Heart right ventricle (tissue), 16 donors: ENCODE measurements at regions of chr6 and their contacts with region 1.

Region 1: DNA sequence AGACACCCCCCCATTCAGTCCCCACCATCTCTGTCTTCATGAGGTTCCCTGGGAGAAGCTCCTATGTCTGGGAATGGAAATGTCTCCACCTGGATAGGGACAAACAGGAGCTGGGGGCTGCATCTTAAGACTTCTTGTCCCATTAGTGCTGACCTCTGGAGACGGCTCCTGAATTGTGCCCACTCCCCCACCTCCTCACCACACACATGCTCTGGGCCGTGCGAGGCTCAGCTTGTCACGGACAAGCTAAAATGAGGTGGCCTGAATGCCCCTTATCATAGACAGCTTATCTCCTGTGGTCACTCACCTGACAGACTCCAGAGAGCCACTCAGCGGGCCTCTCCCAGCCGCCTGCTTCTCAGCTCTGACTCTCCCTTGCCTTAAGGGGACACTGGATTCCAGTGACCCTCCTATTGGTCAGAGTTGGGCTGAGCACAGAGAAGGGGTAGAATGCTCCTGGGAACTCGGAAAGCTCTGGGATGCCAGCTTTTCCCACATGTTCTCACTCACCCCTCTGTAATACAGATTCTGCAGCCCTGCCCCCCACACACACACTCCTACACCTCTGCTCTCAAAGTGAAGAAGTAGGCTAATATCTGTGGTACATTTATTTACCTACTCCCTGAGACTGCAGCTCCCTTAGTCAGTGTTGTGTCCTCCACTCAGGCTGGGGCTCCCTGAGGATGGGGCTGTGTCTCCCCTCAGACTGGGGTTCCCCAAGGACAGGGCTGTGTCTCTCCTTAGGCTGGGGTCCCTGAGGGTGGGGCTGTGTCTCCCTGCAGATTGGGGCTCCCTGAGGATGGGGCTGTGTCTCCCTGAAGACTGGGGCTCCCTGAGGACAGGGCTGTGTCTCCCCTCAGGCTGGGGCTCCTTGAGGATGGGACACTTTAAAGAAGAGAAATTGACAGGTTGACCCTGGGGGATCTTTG is 167.5 kb downstream of the VEGFA start:
- DNase-seq: no peak
- ATAC-seq: peak in 5 of 8 donors; percentile 7 to 56 (median 29)
- H3K4me3 ChIP-seq: no peak overlapping the region
- H3K27ac ChIP-seq: no peak overlapping the region
- H3K4me1 ChIP-seq: peaks cover 0 to 20% (median 6%) of the 10 kb centered on the region in 9 donors
- H3K27me3 ChIP-seq: no peaks in the 10 kb centered on the region
- CTCF ChIP-seq: no peak

Region 2: GRCh38 chr6:43817192-43817591 is 120.3 kb before region 1 on chr6:
- intact Hi-C with region 1: loop called in 1 of 10 experiments (anchors 5 kb)
- DNase-seq: peak; percentile 43 to 52
- ATAC-seq: peak; percentile 63 to 93 (median 90)
- H3K4me3 ChIP-seq: no peak overlapping the region
- H3K27ac ChIP-seq: peak overlapping the region in 2 of 10 donors; percentile 15 to 34
- H3K4me1 ChIP-seq: peaks cover 0 to 13% (median 0%) of the 10 kb centered on the region in 9 donors
- H3K27me3 ChIP-seq: no peaks in the 10 kb centered on the region
- CTCF ChIP-seq: peak; percentile 7 to 63 (median 48)